GM10248 (cell line): ENCODE measurements at regions of chr16 and their contacts with region 1.

Region 1: DNA sequence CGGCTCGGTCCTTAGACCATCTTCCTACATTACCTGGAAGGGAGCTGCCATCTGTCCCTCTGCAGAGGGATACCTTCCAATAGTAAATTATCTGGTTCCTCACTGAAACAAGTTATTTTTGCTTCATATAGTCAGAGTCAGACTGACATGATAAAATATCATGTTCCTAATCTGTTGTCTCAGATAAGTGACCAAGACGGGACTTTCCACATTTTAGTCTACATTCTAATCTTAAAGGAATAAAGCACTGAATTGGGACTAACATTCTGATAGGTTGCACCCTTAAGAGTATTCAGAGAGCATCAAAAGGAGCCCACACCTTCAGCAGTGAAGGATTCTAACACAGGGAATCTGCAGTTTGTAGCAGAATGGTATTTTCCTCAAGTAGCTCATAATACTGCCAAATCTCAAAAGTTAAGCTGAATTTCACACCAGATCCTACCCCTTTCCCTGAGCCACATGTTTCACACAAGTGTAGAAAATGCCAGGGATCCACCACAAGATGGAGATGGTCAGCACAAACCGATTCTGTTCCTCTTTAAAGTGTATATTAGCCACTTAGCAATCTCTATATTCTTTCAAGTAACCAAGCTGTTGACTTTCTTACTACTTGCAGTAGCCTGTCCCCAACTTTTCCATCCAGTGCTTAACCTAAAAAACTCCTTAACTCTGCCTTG is 13.4 kb downstream of the GINS2 start:
- DNase-seq: no peak
- CTCF ChIP-seq: peak; percentile 37

Region 2: GRCh38 chr16:85688586-85689284 is 13.3 kb after region 1 on chr16 and contains the start of gene GINS2:
- CTCF ChIA-PET with region 1: interaction called, 10 read pairs
- POLR2A ChIA-PET with region 1: no interaction called
- DNase-seq: peak; percentile 100
- CTCF ChIP-seq: no peak